IMR-90 (cell line): ENCODE measurements at regions of chr3 and their contacts with region 1.

Region 1: GRCh38 chr3:17258823-17259436 is 374.2 kb downstream of the PLCL2 start:
- DNase-seq: peak; percentile 39
- ATAC-seq: 0 out of 2 replicates have a peak, but pooled peaks have one; percentile 27
- H3K4me3 ChIP-seq: no peak overlapping the region
- H3K27ac ChIP-seq: no peak overlapping the region
- H3K4me1 ChIP-seq: no peaks in the 10 kb centered on the region
- H3K27me3 ChIP-seq: no peaks in the 10 kb centered on the region
- CTCF ChIP-seq: peak; percentile 70
- POLR2A ChIP-seq: no peak
- RAD21 ChIP-seq: peak; percentile 69

Region 2: GRCh38 chr3:17412950-17413530 is 154.1 kb after region 1 on chr3:
- CTCF ChIA-PET with region 1: interaction called, 4 read pairs
- POLR2A ChIA-PET with region 1: no interaction called
- dilution Hi-C with region 1: loop called (anchors 25 kb)
- in situ Hi-C with region 1: loop called (anchors 5 kb)
- intact Hi-C with region 1: loop called (anchors 1 kb)
- DNase-seq: peak; percentile 64
- ATAC-seq: peak; percentile 67
- H3K4me3 ChIP-seq: no peak overlapping the region
- H3K27ac ChIP-seq: no peak overlapping the region
- H3K4me1 ChIP-seq: no peaks in the 10 kb centered on the region
- H3K27me3 ChIP-seq: no peaks in the 10 kb centered on the region
- CTCF ChIP-seq: peak; percentile 76
- POLR2A ChIP-seq: no peak
- RAD21 ChIP-seq: peak; percentile 75

Region 3: DNA sequence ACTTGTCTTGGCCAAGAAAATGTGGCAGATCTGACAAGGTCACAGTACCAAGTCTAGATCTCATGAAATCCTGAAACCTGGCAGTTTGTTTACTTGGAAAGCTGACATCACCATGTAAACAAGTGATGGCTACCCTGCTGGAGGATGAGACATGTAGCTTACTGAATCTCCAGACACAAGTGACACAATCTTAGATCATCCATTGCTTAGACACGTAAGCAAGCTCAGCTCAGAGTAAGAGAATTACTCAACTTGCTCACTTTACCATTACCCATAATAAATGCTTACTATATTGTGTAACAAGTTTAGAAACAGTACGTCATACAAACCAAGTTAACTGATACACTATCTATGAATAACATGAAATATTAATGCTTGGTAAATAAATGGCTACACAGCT is 219.7 kb after region 1 on chr3:
- CTCF ChIA-PET with region 1: no interaction called
- POLR2A ChIA-PET with region 1: no interaction called
- dilution Hi-C with region 1: no loop called
- in situ Hi-C with region 1: no loop called
- intact Hi-C with region 1: no loop called
- DNase-seq: peak; percentile 97
- ATAC-seq: peak; percentile 93
- H3K4me3 ChIP-seq: no peak overlapping the region
- H3K27ac ChIP-seq: no peak overlapping the region
- H3K4me1 ChIP-seq: no peaks in the 10 kb centered on the region; the same call in 1 of the 2 replicates
- H3K27me3 ChIP-seq: no peaks in the 10 kb centered on the region
- CTCF ChIP-seq: no peak
- POLR2A ChIP-seq: no peak
- RAD21 ChIP-seq: no peak

Region 4: DNA sequence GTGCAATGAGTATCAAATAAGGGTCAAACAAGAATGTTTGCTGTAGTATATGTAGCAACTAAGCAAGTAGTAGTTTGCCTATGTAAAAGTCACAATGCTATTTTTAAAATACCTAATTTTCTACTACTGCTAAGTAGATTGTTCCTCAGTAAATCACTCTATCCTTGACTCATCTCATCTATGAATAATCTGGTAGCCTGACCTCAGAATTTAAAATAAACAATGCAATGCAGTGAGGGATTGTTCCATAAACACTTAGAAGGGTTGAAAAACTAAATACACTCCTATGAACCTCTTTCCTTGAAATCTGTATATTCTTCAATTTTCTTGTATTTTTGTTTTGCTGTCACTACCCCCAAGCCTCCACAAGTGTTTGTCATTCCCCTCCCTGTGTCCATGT is 230.2 kb after region 1 on chr3:
- CTCF ChIA-PET with region 1: no interaction called
- POLR2A ChIA-PET with region 1: no interaction called
- dilution Hi-C with region 1: no loop called
- in situ Hi-C with region 1: no loop called
- intact Hi-C with region 1: no loop called
- DNase-seq: peak; percentile 77
- ATAC-seq: peak; percentile 76
- H3K4me3 ChIP-seq: no peak overlapping the region
- H3K27ac ChIP-seq: no peak overlapping the region
- H3K4me1 ChIP-seq: no peaks in the 10 kb centered on the region; the same call in 1 of the 2 replicates
- H3K27me3 ChIP-seq: no peaks in the 10 kb centered on the region
- CTCF ChIP-seq: no peak
- POLR2A ChIP-seq: no peak
- RAD21 ChIP-seq: no peak